Activated naive CD4-positive, alpha-beta T cell treated with anti-CD3 and anti-CD28 coated beads, Interleukin-2, amount 10 ng/mL, durations not matched to agents 7 days and 5 days (primary cell): ENCODE measurements at regions of chr9 and their contacts with region 1.

Region 1: GRCh38 chr9:127734747-127735529 is at the start of gene TOR2A:
- DNase-seq: peak; percentile 99
- H3K4me3 Mint-ChIP-seq: peak within 1 kb of the TSS; percentile 79
- H3K27ac Mint-ChIP-seq: peak within 1 kb of the TSS; percentile 92
- H3K4me1 Mint-ChIP-seq: peaks cover 28% of the 10 kb centered on the region
- H3K27me3 Mint-ChIP-seq: no peaks in the 10 kb centered on the region

Region 2: DNA sequence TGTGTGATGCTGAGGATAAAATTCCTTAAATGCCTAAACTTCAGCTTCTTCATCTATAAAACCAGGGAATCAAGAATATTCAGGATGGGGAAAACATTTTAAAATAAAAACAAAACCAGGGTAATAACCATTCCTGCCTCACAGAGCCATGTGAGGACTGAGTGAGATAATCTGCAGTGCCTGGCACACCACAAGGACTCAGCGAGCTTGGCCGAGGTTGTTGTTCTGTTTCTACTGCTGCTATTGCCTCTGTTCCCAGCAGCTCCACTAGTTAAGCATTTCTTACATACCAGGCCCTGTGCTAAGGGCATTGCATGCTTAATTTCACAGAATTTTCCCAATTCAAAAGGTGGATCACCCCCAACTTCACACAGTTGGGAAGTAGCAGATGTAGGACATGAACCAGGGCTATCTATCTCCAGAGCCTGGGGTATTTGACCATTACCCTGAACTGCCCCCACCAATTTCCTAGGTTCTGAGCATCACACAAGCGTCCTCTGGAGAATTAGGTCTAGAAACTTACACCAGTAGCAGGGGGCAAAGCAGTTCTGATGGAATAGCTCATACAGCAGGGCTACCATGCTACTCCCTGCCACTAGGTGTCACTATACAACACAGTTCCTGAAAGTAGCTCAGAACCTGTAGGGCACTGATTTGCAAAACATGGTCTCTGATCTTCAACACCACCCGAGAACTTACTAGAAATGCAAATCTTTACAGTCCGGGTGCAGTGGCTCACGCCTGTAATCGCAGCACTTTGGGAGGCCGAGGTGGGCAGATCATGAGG is 209.3 kb before region 1 on chr9:
- CTCF ChIA-PET with region 1: interaction called, 15 read pairs
- DNase-seq: peak; percentile 46
- H3K4me3 Mint-ChIP-seq: no peak overlapping the region
- H3K27ac Mint-ChIP-seq: no peak overlapping the region
- H3K4me1 Mint-ChIP-seq: peaks cover 4% of the 10 kb centered on the region
- H3K27me3 Mint-ChIP-seq: no peaks in the 10 kb centered on the region

Region 3: DNA sequence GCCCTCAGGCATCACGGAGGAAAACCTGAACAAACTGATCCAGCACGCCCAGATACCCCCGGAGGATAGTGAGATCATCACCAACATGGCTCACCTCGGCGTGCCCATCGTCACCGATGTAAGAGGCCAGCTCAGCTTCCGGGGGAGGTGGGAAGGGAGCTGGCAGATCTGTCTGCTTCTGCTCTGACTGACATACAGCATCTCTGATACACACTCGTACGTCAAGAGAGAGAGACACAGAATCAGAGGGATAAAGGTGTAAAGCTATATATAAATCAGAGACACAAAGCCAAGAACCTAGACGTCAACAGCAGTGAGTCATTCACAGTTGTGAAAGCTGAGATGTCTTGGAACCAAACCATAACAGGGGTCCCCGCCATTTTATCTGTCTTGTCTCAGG is 58.3 kb before region 1 on chr9:
- CTCF ChIA-PET with region 1: no interaction called
- DNase-seq: no peak
- H3K4me3 Mint-ChIP-seq: no peak overlapping the region
- H3K27ac Mint-ChIP-seq: no peak overlapping the region
- H3K4me1 Mint-ChIP-seq: no peaks in the 10 kb centered on the region
- H3K27me3 Mint-ChIP-seq: no peaks in the 10 kb centered on the region

Region 4: GRCh38 chr9:127723450-127723849 is 11.5 kb before region 1 on chr9:
- CTCF ChIA-PET with region 1: interaction called, 10 read pairs
- DNase-seq: no peak
- H3K4me3 Mint-ChIP-seq: no peak overlapping the region
- H3K27ac Mint-ChIP-seq: no peak overlapping the region
- H3K4me1 Mint-ChIP-seq: peaks cover 23% of the 10 kb centered on the region
- H3K27me3 Mint-ChIP-seq: peaks cover 12% of the 10 kb centered on the region

Region 5: DNA sequence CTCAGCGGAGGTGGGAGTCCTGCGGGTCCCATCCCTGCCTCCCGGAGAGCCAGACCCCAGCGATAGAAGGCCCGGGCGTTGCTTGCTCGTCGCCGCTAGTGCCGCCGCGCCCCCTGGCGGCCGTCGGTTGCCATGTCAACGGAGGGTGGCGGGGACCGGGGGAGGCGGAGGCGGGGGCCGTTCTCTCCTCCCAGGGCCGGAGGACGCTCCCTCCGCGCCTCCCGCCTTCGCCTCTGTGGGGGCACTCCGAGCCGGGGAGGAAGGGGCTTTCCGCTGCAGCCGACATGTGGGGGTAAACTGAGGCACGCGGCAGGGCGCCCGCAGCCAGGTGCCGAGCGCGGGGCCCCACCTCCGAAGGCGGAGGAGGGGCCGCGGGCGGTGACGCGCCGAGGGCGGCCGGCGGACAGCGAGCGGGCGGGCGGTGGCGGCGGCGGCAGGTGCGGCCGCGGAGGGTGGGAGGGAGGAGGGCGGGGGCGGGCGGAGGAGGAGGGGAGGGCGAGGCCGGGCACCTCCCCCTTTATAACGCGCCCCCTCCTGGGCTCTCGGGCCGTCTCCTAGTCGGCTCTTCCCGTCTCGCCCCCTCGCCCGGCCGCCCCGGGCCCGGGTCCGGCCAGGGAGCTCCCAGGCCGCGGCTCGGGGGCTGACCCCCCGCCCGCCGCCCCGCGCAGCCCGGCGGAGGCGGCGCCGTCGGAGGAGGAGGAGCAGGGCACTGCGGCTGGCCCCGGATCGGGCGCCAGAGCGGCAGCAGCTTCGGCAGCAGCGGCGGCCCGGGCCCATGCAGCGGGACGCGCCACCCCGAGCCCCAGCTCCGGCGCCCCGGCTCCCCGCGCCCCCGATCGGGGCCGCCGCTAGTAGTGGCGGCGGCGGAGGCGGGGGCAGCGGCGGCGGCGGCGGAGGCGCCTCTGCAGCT is 50.3 kb after region 1 on chr9:
- CTCF ChIA-PET with region 1: interaction called, 34 read pairs
- DNase-seq: peak; percentile 91
- H3K4me3 Mint-ChIP-seq: peak overlapping the region; percentile 95
- H3K27ac Mint-ChIP-seq: peak overlapping the region; percentile 96
- H3K4me1 Mint-ChIP-seq: peaks cover 75% of the 10 kb centered on the region
- H3K27me3 Mint-ChIP-seq: no peaks in the 10 kb centered on the region

Region 6: GRCh38 chr9:127899128-127899946 is 164.4 kb after region 1 on chr9 and contains the start of gene ST6GALNAC6:
- CTCF ChIA-PET with region 1: no interaction called
- DNase-seq: peak; percentile 77
- H3K4me3 Mint-ChIP-seq: peak within 1 kb of the TSS; percentile 84
- H3K27ac Mint-ChIP-seq: peak within 1 kb of the TSS; percentile 83
- H3K4me1 Mint-ChIP-seq: peaks cover 41% of the 10 kb centered on the region
- H3K27me3 Mint-ChIP-seq: no peaks in the 10 kb centered on the region

Region 7: GRCh38 chr9:127916665-127917613 is 182.0 kb after region 1 on chr9 and contains the start of gene ST6GALNAC4:
- CTCF ChIA-PET with region 1: interaction called, 33 read pairs
- DNase-seq: peak; percentile 97
- H3K4me3 Mint-ChIP-seq: peak within 1 kb of the TSS; percentile 73
- H3K27ac Mint-ChIP-seq: peak within 1 kb of the TSS; percentile 88
- H3K4me1 Mint-ChIP-seq: peaks cover 77% of the 10 kb centered on the region
- H3K27me3 Mint-ChIP-seq: peaks cover 13% of the 10 kb centered on the region